ENCODE measurements at regions of chr19 and their contacts with region 1.

Region 1: DNA sequence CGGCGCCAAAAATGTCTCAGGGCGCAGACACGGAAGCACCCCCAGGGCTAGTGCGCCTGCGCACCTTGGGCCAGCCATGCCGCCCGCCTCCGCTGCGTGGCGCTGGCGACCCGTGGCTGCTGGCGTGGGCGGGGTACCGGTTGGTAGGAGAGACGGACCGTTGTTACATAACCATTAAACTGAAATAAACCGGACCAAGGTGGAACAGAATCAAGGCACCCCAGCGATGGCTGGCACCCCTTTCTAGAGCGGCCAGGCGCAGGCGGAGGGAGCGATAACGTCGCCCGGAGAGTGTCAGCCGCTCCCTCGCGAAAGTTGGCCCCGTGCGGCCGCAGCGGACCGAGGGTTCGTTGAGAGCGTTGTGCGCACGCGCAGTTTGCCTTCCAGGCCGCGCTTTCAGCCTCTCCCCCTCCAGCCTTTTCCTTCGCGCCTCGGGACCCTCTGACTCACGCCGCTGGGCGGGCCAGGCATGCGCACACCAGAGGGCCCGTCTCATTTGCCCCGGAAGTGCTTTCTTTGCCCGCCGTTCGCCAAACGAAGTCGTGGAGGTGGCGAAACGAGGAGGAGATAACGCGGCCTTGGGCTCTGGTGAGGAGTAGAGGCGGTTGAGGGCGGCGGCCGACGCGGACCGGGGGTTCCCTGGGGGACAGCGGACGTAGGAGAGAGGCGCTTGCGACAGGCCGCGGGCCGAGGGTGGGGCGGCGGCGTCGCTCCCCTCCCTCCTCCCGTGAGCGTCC is at the starts of genes PLEKHJ1 and SF3A2:
- DNase-seq: peak; percentile 98
- H3K4me3 Mint-ChIP-seq: peak within 1 kb of the TSS; percentile 94
- H3K27ac Mint-ChIP-seq: peak within 1 kb of the TSS; percentile 96
- H3K4me1 Mint-ChIP-seq: peaks cover 68% of the 10 kb centered on the region
- H3K27me3 Mint-ChIP-seq: no peaks in the 10 kb centered on the region
- total RNA-seq, gene PLEKHJ1: 58.3 to 60.4 TPM
- total RNA-seq, gene SF3A2: 137 to 145 TPM

Region 2: GRCh38 chr19:2151339-2152229 is 84.9 kb before region 1 on chr19 and contains the start of gene AP3D1:
- CTCF ChIA-PET with region 1: interaction called, 10 read pairs
- POLR2A ChIA-PET with region 1: interaction called, 7 read pairs
- DNase-seq: peak; percentile 100
- H3K4me3 Mint-ChIP-seq: peak within 1 kb of the TSS; percentile 72
- H3K27ac Mint-ChIP-seq: peak within 1 kb of the TSS; percentile 73
- H3K4me1 Mint-ChIP-seq: peaks cover 54% of the 10 kb centered on the region
- H3K27me3 Mint-ChIP-seq: no peaks in the 10 kb centered on the region
- total RNA-seq, gene AP3D1: 104 to 105 TPM

Region 3: GRCh38 chr19:2207991-2208860 is 28.3 kb before region 1 on chr19:
- CTCF ChIA-PET with region 1: no interaction called
- POLR2A ChIA-PET with region 1: no interaction called
- DNase-seq: peak; percentile 47
- H3K4me3 Mint-ChIP-seq: no peak overlapping the region
- H3K27ac Mint-ChIP-seq: no peak overlapping the region
- H3K4me1 Mint-ChIP-seq: peaks cover 2% of the 10 kb centered on the region
- H3K27me3 Mint-ChIP-seq: no peaks in the 10 kb centered on the region

Region 4: GRCh38 chr19:2253106-2254053 is 16.9 kb after region 1 on chr19:
- CTCF ChIA-PET with region 1: interaction called, 25 read pairs
- POLR2A ChIA-PET with region 1: interaction called, 69 read pairs
- DNase-seq: peak; percentile 44
- H3K4me3 Mint-ChIP-seq: no peak overlapping the region
- H3K27ac Mint-ChIP-seq: no peak overlapping the region
- H3K4me1 Mint-ChIP-seq: peaks cover 23% of the 10 kb centered on the region
- H3K27me3 Mint-ChIP-seq: peaks cover 30% of the 10 kb centered on the region

Region 5: GRCh38 chr19:2261438-2262172 is 25.1 kb after region 1 on chr19:
- CTCF ChIA-PET with region 1: interaction called, 46 read pairs
- POLR2A ChIA-PET with region 1: interaction called, 69 read pairs
- DNase-seq: peak; percentile 76
- H3K4me3 Mint-ChIP-seq: no peak overlapping the region
- H3K27ac Mint-ChIP-seq: peak overlapping the region; percentile 48
- H3K4me1 Mint-ChIP-seq: peaks cover 41% of the 10 kb centered on the region
- H3K27me3 Mint-ChIP-seq: no peaks in the 10 kb centered on the region

Region 6: GRCh38 chr19:2302319-2303210 is 66.1 kb after region 1 on chr19:
- CTCF ChIA-PET with region 1: no interaction called
- POLR2A ChIA-PET with region 1: no interaction called
- DNase-seq: no peak
- H3K4me3 Mint-ChIP-seq: no peak overlapping the region
- H3K27ac Mint-ChIP-seq: no peak overlapping the region
- H3K4me1 Mint-ChIP-seq: no peaks in the 10 kb centered on the region
- H3K27me3 Mint-ChIP-seq: peaks cover 47% of the 10 kb centered on the region

Measured in activated CD4-positive, alpha-beta memory T cell treated with anti-CD3 and anti-CD28 coated beads, Interleukin-2, amount 10 ng/mL, durations not matched to agents 7 days and 5 days (primary cell).